ENCODE measurements at regions of chr17 and their contacts with region 1.

Region 1: DNA sequence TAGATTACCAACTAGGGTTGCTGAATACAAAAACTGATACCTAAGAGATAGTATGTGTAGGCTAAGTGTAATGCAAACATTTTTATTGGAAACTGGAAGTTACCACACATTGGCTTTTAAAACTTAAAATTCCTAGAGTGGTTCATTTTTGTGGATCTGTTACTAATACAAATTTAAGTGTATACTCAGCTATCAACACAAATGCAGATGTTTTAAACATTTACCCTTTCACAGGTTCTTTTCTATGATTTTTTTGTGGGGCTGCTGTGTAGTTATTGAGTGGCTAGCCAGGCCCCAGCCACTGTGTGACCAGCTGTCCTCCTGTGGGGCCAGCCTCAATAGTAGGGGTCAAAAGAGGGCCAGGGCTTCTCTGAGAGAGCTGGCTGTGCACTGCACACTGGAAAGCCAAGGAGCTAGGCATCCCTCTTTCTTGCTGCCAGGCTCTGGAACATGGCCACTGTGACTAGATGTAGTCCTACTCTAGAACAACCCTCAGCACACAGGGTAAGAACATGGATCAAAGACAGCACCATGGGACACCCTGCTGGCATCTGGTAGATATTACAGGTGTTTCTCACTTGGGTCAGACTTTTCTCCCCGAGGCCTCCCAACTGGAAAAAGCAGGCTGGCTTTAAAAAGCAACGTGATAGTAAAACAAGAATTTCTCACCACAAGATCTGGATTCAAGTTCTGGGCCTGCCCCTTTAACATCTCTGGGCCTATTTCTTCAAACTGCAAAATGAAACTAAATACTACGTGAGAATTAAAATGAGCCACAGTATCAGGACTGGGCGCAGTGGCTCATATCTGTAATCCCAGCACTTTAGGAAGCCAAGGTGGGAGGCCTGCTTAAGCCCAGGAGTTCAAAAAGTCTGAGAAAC is 7.3 kb upstream of the VEZF1 start:
- DNase-seq: peak; percentile 64 to 71
- H3K4me3 ChIP-seq: no peak overlapping the region
- H3K27ac ChIP-seq: peak overlapping the region; percentile 2; the same call in 1 of the 2 replicates
- H3K4me1 ChIP-seq: no peaks in the 10 kb centered on the region
- H3K27me3 ChIP-seq: no peaks in the 10 kb centered on the region
- CTCF ChIP-seq: peak; percentile 93

Region 2: GRCh38 chr17:57130761-57131461 is 864.4 kb before region 1 on chr17:
- CTCF ChIA-PET with region 1: no interaction called
- POLR2A ChIA-PET with region 1: no interaction called
- intact Hi-C with region 1: loop called (anchors 2 kb)
- DNase-seq: peak; percentile 66 to 67
- H3K4me3 ChIP-seq: no peak overlapping the region; the same call in 1 of the 2 replicates
- H3K27ac ChIP-seq: no peak overlapping the region
- H3K4me1 ChIP-seq: peaks cover 7% of the 10 kb centered on the region
- H3K27me3 ChIP-seq: no peaks in the 10 kb centered on the region
- CTCF ChIP-seq: peak; percentile 96

Region 3: GRCh38 chr17:57747221-57748017 is 247.9 kb before region 1 on chr17:
- CTCF ChIA-PET with region 1: no interaction called
- POLR2A ChIA-PET with region 1: no interaction called
- intact Hi-C with region 1: loop called (anchors 5 kb)
- DNase-seq: peak; percentile 15 to 54
- H3K4me3 ChIP-seq: no peak overlapping the region
- H3K27ac ChIP-seq: no peak overlapping the region
- H3K4me1 ChIP-seq: no peaks in the 10 kb centered on the region
- H3K27me3 ChIP-seq: peaks cover 82% of the 10 kb centered on the region
- CTCF ChIP-seq: peak; percentile 88

Region 4: GRCh38 chr17:57861000-57861789 is 134.1 kb before region 1 on chr17:
- CTCF ChIA-PET with region 1: interaction called, 8 read pairs
- POLR2A ChIA-PET with region 1: interaction called, 6 read pairs
- intact Hi-C with region 1: loop called (anchors 1 kb)
- DNase-seq: peak; percentile 63 to 89
- H3K4me3 ChIP-seq: peak overlapping the region; percentile 52
- H3K27ac ChIP-seq: no peak overlapping the region
- H3K4me1 ChIP-seq: peaks cover 18% of the 10 kb centered on the region
- H3K27me3 ChIP-seq: no peaks in the 10 kb centered on the region
- CTCF ChIP-seq: no peak

Region 5: DNA sequence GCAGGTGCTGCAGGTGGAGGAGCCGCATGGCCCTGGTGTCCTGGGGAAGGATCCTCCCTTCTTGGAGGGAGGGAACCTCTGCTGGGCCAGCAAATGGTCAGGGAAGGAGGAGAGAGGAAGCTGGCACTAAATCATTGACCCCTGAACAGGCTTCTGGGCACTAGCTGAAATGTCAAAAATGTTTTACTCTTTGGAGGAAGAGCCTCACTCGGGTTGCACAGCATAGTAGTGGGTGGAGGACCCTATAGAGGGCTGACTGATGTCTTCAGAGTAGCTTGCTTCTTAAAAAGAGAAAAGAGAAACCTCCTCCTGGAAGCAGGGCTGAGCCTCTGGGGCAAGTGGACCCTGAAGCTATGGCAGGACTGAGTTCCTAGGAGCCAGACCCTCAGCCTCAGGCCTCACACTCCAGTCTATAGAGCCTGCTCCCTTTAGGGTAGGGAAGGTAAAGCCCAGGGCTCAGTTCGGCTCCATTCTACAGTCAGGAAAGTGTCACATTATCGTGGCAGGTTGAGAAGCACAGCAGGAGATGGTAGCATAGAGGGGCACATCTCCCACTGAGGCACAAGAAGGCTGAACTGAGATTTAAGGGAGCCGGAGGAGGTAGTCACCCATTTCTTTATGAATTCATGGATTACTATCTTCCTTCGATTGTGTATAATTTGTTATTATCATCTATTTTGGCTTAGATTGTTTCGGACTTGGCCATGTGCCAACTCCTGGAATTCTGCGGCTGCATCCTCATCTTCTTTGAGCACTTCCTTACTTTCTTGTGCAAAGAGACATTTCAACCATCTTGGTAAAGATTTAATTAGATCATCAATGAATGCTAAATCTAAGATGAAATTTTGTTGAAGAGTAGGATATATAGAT is 32.8 kb before region 1 on chr17:
- CTCF ChIA-PET with region 1: no interaction called
- POLR2A ChIA-PET with region 1: no interaction called
- intact Hi-C with region 1: no loop called
- DNase-seq: no peak
- H3K4me3 ChIP-seq: no peak overlapping the region
- H3K27ac ChIP-seq: no peak overlapping the region
- H3K4me1 ChIP-seq: no peaks in the 10 kb centered on the region
- H3K27me3 ChIP-seq: no peaks in the 10 kb centered on the region
- CTCF ChIP-seq: no peak

Region 6: GRCh38 chr17:58028578-58028977 is 33.3 kb after region 1 on chr17:
- CTCF ChIA-PET with region 1: no interaction called
- POLR2A ChIA-PET with region 1: no interaction called
- intact Hi-C with region 1: no loop called
- DNase-seq: no peak
- H3K4me3 ChIP-seq: no peak overlapping the region
- H3K27ac ChIP-seq: no peak overlapping the region
- H3K4me1 ChIP-seq: peaks cover 16% of the 10 kb centered on the region
- H3K27me3 ChIP-seq: no peaks in the 10 kb centered on the region
- CTCF ChIP-seq: no peak

Region 7: DNA sequence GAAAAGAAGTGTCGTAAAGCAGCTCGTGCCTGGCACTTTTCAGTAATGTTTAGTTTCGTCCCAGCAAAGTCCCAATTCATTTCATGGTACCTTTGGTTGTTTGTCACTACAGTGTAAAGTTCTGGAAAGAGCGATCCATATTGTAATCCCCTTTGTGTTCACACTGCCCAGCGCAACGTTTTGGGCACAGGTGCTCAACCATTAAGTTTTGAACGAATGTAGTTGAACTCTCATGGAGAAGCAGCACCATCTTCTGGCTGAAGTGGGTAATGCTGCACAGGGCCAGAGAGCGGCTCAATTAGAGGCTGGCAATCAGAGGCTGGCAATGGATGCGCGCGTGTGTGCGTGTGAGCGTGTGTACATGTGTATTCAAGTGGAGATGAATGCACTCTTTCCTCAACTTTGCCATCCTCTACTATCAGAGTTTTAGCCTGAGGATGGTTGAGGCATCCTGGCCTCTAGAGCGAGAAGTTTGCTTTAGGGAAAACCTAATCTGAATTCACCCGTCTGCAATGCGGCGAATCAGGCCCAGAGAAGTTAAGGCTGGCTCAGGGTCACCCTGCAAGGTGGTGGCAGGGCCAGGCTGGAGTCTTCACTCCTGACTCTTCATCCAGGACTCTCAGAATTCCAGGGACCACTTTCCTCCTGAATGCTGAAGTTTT is 117.8 kb after region 1 on chr17:
- CTCF ChIA-PET with region 1: no interaction called
- POLR2A ChIA-PET with region 1: no interaction called
- intact Hi-C with region 1: loop called (anchors 2 kb)
- DNase-seq: peak; percentile 61 to 74
- H3K4me3 ChIP-seq: no peak overlapping the region
- H3K27ac ChIP-seq: no peak overlapping the region
- H3K4me1 ChIP-seq: no peaks in the 10 kb centered on the region
- H3K27me3 ChIP-seq: peaks cover 16% of the 10 kb centered on the region
- CTCF ChIP-seq: peak; percentile 98